ENCODE measurements at regions of chr2 and their contacts with region 1.

Region 1: GRCh38 chr2:70871398-70872211 is 36.0 kb upstream of the CD207 start:
- DNase-seq: peak in 1 of 2 experiments; percentile 98
- H3K4me3 ChIP-seq: no peak overlapping the region
- H3K27ac ChIP-seq: no peak overlapping the region
- H3K4me1 ChIP-seq: no peaks in the 10 kb centered on the region
- H3K27me3 ChIP-seq: peaks cover 6 to 42% (median 22%) of the 10 kb centered on the region in 4 experiments
- CTCF ChIP-seq: peak; percentile 89 to 99 (median 96)
- EP300 ChIP-seq: no peak
- POLR2A ChIP-seq: no peak
- RAD21 ChIP-seq: peak; percentile 92 to 96

Region 2: DNA sequence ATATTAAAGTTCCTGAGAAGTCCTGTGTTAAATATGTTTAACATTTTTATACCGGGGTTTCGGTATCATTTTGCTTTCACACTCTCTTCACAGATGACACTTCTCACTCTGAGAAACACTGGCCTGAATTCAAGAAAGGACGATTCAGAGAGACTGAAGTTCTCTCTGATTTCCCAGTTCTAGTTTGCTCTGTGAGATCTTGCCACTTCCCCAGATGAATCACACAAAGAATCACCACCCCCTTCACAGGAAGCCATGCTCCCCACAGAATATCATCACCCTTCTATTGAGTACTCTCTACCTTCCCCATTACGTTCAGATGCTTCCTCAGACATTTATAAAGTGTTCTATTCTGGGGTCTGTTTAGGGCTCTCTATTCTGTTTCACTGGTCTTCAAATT is 19.9 kb before region 1 on chr2:
- CTCF ChIA-PET with region 1: interaction called, 24 read pairs
- POLR2A ChIA-PET with region 1: no interaction called
- DNase-seq: no peak
- H3K4me3 ChIP-seq: no peak overlapping the region
- H3K27ac ChIP-seq: no peak overlapping the region
- H3K4me1 ChIP-seq: no peaks in the 10 kb centered on the region
- H3K27me3 ChIP-seq: no peaks in the 10 kb centered on the region
- CTCF ChIP-seq: no peak
- EP300 ChIP-seq: no peak
- POLR2A ChIP-seq: no peak
- RAD21 ChIP-seq: no peak

Region 3: DNA sequence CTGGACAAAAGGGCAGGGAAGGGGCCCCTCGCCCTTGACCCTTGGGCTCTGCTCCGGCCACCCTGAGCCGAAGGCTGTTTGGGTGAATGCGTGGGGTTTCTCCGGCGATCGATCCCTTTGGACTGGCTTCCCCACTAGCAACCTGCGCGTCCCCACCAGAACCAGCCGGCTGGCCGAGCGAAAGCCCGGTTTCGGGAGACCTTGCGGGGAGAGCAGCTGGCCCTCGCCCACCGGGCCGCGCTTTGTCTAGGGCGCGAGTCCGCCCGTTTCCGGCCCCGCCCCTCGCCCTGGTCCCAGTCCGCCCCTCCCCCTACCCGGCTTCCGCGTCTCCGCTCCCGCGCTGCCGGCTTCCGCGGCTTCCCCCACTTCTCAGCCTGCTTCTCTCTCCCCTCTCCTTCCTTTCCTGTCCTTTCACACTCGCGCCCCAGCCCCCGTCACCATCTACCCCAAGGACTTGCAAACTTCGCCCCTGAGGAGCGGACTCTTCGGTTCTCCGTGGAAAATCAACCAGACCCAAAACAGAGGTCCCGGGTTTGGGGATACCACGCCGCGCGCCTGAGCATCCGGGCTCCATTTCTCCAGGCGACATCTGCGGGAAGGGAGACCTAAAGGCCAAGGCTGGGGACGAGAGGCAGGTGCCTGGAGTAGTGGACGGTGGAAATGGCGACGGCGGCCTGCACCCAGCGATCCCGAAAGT is 16.1 kb after region 1 on chr2:
- CTCF ChIA-PET with region 1: interaction called, 57 read pairs
- POLR2A ChIA-PET with region 1: interaction called, 3 read pairs
- DNase-seq: peak in 1 of 2 experiments; percentile 90
- H3K4me3 ChIP-seq: peak overlapping the region; percentile 22 to 62 (median 40); a peak in 7 of 8 replicates
- H3K27ac ChIP-seq: no peak overlapping the region
- H3K4me1 ChIP-seq: peaks cover 0 to 20% (median 6%) of the 10 kb centered on the region in 4 experiments; a peak in 5 of 7 replicates
- H3K27me3 ChIP-seq: peaks cover 77 to 100% (median 93%) of the 10 kb centered on the region in 4 experiments
- CTCF ChIP-seq: no peak
- EP300 ChIP-seq: no peak
- POLR2A ChIP-seq: no peak
- RAD21 ChIP-seq: no peak

Region 4: GRCh38 chr2:70919672-70920366 is 48.2 kb after region 1 on chr2:
- CTCF ChIA-PET with region 1: interaction called, 146 read pairs
- POLR2A ChIA-PET with region 1: interaction called, 3 read pairs
- DNase-seq: peak; percentile 79 to 99
- H3K4me3 ChIP-seq: no peak overlapping the region
- H3K27ac ChIP-seq: no peak overlapping the region
- H3K4me1 ChIP-seq: peaks cover 0 to 8% (median 3%) of the 10 kb centered on the region in 4 experiments; a peak in 4 of 7 replicates
- H3K27me3 ChIP-seq: peaks cover 0 to 4% (median 0%) of the 10 kb centered on the region in 4 experiments; a peak in 1 of 7 replicates
- CTCF ChIP-seq: peak; percentile 91 to 98 (median 96)
- EP300 ChIP-seq: no peak
- POLR2A ChIP-seq: no peak
- RAD21 ChIP-seq: peak; percentile 77 to 82

Region 5: GRCh38 chr2:70954886-70955285 is 83.3 kb after region 1 on chr2:
- CTCF ChIA-PET with region 1: interaction called, 99 read pairs
- POLR2A ChIA-PET with region 1: no interaction called
- DNase-seq: no peak
- H3K4me3 ChIP-seq: no peak overlapping the region
- H3K27ac ChIP-seq: no peak overlapping the region
- H3K4me1 ChIP-seq: no peaks in the 10 kb centered on the region; a peak in 1 of 7 replicates
- H3K27me3 ChIP-seq: peaks cover 0 to 4% (median 3%) of the 10 kb centered on the region in 4 experiments; a peak in 1 of 7 replicates
- CTCF ChIP-seq: no peak
- EP300 ChIP-seq: no peak
- POLR2A ChIP-seq: no peak
- RAD21 ChIP-seq: no peak

Region 6: DNA sequence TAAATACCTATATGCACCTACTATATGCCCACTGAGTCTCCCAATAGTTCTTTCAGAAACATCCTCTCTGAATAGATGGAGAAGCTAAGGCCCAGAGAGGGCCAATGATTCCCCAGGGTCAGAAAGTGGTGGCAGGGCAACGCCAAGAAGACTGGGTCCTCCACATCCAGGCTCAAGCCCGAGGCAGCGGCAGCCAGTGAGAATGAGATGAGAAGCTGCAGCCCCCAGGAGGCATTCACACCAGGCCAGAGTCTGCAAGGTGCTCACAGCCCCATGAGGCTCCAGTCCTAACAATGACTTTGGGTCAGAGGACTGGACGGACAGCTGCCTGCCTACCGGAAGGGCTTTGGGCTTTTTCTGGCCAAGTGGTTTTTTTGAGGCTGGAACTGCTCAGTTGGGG is 119.5 kb after region 1 on chr2:
- CTCF ChIA-PET with region 1: no interaction called
- POLR2A ChIA-PET with region 1: no interaction called
- DNase-seq: no peak
- H3K4me3 ChIP-seq: no peak overlapping the region
- H3K27ac ChIP-seq: no peak overlapping the region
- H3K4me1 ChIP-seq: peaks cover 0 to 5% (median 3%) of the 10 kb centered on the region in 4 experiments; a peak in 3 of 7 replicates
- H3K27me3 ChIP-seq: no peaks in the 10 kb centered on the region; a peak in 2 of 7 replicates
- CTCF ChIP-seq: no peak
- EP300 ChIP-seq: no peak
- POLR2A ChIP-seq: no peak
- RAD21 ChIP-seq: no peak